ENCODE measurements at regions of chr1 and their contacts with region 1.

Region 1: DNA sequence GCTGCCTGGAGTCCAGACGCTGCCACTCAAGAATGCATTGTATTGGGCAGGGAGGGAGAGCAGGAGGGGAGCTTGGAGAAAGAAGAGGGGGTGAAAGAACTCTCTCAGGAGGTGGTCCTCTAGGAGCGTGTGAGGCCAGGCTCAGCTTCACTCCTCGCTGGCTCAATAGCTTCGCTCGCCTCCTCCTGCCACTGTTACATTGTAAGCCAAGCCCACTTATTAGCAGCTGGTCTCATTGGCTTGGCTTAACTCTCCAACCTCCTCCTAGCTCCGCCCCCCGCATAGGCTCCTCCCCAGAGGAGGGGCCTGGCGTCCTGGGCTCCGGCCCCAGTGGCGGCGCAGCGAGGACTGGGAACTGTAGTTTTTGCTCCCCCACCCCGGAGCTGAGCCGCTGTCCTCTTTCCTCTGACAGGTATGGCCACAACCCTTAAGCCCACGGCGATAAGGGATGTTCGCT is at the start of gene KCNN3:
- DNase-seq: peak; percentile 98
- ATAC-seq: peak; percentile 99
- H3K4me3 Mint-ChIP-seq: peak within 1 kb of the TSS; percentile 69
- H3K27ac Mint-ChIP-seq: no peak within 1 kb of the TSS
- H3K4me1 Mint-ChIP-seq: peaks cover 50% of the 10 kb centered on the region
- H3K27me3 Mint-ChIP-seq: peaks cover 29% of the 10 kb centered on the region
- CTCF ChIP-seq: no peak
- total RNA-seq, gene KCNN3: 1.3 to 2.1 TPM (median 1.9 TPM) in 3 replicates

Region 2: DNA sequence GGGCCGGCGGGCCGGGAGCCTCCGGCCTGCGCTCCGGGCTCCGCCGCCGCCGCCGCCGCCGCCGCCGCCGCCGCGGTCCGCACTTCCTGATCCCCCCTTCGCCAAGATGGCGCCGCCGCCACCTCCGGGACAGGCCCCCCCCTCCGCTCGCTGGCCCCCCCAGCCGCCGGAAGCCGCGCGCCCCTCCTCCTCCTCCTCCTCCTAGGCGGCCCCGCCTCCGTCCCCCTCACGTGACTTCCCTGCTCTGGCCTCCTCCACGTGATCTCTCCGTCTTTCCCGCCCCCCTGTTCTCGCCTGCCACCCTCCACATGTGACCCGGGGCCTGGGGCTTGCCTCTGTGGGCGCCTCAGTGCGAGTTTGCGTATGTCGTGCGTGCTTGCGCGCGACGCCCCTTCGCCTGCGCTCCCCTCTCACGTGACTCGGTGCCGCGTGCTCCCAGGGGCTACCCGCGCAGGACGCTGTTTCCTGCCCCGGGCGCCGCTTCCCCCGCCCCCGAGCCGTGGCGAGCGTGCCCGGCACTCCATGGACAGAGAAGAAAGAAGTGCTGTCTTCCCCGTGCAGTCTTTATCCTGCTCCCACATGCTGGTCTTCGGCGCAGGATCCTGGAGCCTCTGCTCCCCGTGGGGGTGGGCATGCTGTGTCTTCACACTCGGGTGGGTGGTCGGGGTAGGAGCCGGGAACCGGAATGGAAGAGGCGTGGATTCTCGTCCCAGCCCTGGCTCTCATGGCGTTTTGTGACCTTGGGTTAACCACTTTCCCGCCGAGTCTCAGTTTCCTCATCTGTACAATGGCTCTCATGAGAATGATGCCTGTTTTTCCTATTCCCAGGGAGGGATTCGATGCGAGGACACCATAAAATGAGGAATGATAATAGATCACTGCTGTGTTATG is 311.3 kb before region 1 on chr1 and contains the start of gene UBE2Q1:
- CTCF ChIA-PET with region 1: interaction called, 14 read pairs
- POLR2A ChIA-PET with region 1: no interaction called
- DNase-seq: peak; percentile 95
- ATAC-seq: peak; percentile 70
- H3K4me3 Mint-ChIP-seq: peak within 1 kb of the TSS; percentile 94
- H3K27ac Mint-ChIP-seq: peak within 1 kb of the TSS; percentile 89
- H3K4me1 Mint-ChIP-seq: peaks cover 28% of the 10 kb centered on the region
- H3K27me3 Mint-ChIP-seq: no peaks in the 10 kb centered on the region
- CTCF ChIP-seq: no peak
- total RNA-seq, gene UBE2Q1: 60.8 to 62.7 TPM (median 61.6 TPM) in 3 replicates

Region 3: DNA sequence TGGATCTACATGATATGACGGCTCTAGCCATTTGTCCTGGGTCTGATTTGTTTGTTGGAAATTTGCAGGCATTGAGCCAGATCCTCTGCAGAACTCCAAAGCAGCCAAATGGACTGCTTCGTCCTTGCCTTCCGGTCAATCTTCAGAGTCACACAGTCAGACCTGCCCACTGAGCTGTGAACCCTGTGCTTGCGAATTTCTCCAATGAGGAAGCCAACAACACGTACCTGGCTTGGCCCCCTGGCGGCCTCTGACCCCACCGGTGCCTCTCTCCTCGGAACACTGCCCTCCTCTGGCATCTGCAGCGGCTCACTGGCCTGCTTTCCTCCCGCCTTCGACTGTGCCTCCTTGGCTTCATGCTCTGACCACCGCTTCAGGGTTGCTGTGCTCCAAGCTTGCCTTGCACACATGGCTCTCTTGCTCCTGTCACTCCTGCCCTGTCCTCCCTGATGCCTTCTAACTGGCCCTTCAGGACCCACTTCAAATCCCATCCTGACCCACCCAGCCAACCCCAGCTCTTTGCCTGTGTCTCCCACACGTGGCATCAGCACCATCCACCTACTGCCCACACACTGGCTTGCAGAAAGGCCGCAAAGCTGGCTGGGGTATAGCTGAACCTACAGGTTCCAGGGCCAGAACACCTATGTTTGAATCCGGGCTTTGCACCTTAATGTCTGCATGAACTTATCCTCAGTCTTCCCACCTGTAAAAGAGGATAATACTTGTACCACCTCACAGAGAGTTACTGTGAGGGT is 128.2 kb before region 1 on chr1:
- CTCF ChIA-PET with region 1: interaction called, 12 read pairs
- POLR2A ChIA-PET with region 1: interaction called, 3 read pairs
- DNase-seq: peak; percentile 83
- ATAC-seq: peak; percentile 98
- H3K4me3 Mint-ChIP-seq: no peak overlapping the region
- H3K27ac Mint-ChIP-seq: no peak overlapping the region
- H3K4me1 Mint-ChIP-seq: peaks cover 39% of the 10 kb centered on the region
- H3K27me3 Mint-ChIP-seq: no peaks in the 10 kb centered on the region
- CTCF ChIP-seq: peak; percentile 39

Region 4: DNA sequence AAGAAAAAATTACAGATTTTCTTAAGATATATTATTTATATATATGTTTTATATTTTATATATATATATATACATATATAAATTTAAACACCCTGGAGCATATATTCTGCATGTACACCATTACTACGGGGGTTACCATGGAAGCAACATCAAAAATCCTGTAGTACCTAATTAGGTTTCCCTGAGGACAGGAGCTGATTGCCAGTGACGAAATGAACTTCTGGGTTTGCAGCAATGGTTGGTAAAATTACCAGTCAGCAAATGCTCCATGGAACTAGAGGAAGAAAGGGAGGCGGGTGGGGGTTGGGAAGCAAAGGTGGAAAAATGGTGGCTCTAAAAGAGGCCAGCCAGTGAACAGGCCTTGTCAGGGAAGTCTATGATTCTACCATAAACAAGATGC is 89.6 kb before region 1 on chr1:
- CTCF ChIA-PET with region 1: no interaction called
- POLR2A ChIA-PET with region 1: no interaction called
- DNase-seq: no peak
- ATAC-seq: no peak
- H3K4me3 Mint-ChIP-seq: no peak overlapping the region
- H3K27ac Mint-ChIP-seq: no peak overlapping the region
- H3K4me1 Mint-ChIP-seq: peaks cover 9% of the 10 kb centered on the region
- H3K27me3 Mint-ChIP-seq: peaks cover 3% of the 10 kb centered on the region; the same call in 1 of the 2 replicates
- CTCF ChIP-seq: no peak

Region 5: GRCh38 chr1:154819628-154820590 is 50.2 kb before region 1 on chr1:
- CTCF ChIA-PET with region 1: interaction called, 12 read pairs
- POLR2A ChIA-PET with region 1: no interaction called
- DNase-seq: peak; percentile 66
- ATAC-seq: peak; percentile 97
- H3K4me3 Mint-ChIP-seq: no peak overlapping the region
- H3K27ac Mint-ChIP-seq: no peak overlapping the region
- H3K4me1 Mint-ChIP-seq: peaks cover 13% of the 10 kb centered on the region
- H3K27me3 Mint-ChIP-seq: no peaks in the 10 kb centered on the region
- CTCF ChIP-seq: peak; percentile 63

Region 6: DNA sequence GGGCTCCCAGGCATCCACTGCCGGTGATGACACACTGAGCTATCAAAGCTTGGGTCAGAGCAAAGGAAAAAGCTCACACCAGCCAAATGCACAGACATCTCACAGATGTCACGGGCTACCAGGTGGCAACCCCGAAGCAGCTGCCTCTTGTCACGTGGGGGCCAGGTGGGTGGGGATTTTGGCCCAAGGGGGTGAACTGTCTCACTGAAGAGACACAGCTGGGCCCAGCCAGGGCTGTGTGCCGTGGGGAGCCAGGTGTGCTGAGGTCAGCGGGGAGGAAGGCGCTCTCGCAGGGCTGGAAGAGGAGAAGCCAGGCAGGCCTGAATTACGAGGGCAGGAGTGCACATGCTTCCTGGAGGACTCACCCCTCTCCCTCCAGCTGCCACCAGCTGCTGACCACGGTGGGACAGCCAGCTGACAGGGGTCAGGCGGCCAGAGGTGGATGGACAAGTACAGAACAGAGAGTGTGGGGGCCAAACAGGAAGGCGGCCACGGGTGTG is 32.4 kb before region 1 on chr1:
- CTCF ChIA-PET with region 1: interaction called, 19 read pairs
- POLR2A ChIA-PET with region 1: no interaction called
- DNase-seq: no peak
- ATAC-seq: no peak
- H3K4me3 Mint-ChIP-seq: no peak overlapping the region
- H3K27ac Mint-ChIP-seq: no peak overlapping the region
- H3K4me1 Mint-ChIP-seq: peaks cover 19% of the 10 kb centered on the region
- H3K27me3 Mint-ChIP-seq: no peaks in the 10 kb centered on the region
- CTCF ChIP-seq: no peak

Region 7: GRCh38 chr1:154856049-154856448 is 14.1 kb before region 1 on chr1:
- CTCF ChIA-PET with region 1: interaction called, 33 read pairs
- POLR2A ChIA-PET with region 1: interaction called, 4 read pairs
- DNase-seq: peak; percentile 49
- ATAC-seq: no peak; the same call in 1 of the 2 replicates
- H3K4me3 Mint-ChIP-seq: no peak overlapping the region
- H3K27ac Mint-ChIP-seq: no peak overlapping the region
- H3K4me1 Mint-ChIP-seq: peaks cover 12% of the 10 kb centered on the region
- H3K27me3 Mint-ChIP-seq: no peaks in the 10 kb centered on the region
- CTCF ChIP-seq: no peak

Region 8: DNA sequence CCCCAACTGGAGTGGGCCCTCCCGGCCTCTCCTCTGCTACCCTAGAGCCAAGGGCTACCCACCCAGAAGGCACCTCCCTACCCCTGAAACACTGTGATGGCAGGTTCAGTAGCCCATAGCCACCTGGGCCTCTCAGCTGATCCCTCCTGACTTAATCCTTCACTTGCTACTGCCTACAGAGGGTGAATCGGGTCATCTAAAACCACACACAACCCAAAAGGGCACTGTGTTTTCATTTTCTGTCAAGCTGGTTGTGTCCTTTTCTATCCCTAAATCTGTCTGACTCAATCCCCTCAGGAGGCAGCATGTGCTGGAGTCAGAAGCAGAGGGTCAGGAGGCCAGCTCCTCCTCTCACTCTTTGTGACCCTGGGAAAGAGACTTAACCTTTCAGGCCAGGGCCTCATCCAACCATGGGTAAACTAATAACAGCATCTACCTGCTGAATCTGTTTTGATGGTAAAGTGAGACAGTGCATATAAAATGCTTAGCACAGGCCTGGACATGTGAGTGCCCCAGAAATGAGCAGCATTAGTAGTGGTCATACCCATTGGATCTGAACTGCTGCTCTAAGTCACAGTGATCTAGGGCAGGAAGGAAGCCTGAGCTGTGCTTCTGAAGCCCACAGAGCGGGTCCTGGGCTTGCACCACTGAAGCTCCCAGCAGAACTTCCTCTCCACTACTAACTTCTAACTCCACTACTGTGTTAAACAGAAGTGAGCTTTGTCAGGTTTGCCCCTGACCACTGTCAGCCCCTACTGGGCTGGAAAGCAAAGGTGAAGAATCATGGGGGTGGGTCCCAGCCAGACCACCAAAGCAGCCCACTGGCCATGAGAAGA is 55.4 kb after region 1 on chr1:
- CTCF ChIA-PET with region 1: no interaction called
- POLR2A ChIA-PET with region 1: no interaction called
- DNase-seq: no peak
- ATAC-seq: no peak
- H3K4me3 Mint-ChIP-seq: no peak overlapping the region
- H3K27ac Mint-ChIP-seq: no peak overlapping the region
- H3K4me1 Mint-ChIP-seq: no peaks in the 10 kb centered on the region
- H3K27me3 Mint-ChIP-seq: no peaks in the 10 kb centered on the region
- CTCF ChIP-seq: no peak

Region 9: DNA sequence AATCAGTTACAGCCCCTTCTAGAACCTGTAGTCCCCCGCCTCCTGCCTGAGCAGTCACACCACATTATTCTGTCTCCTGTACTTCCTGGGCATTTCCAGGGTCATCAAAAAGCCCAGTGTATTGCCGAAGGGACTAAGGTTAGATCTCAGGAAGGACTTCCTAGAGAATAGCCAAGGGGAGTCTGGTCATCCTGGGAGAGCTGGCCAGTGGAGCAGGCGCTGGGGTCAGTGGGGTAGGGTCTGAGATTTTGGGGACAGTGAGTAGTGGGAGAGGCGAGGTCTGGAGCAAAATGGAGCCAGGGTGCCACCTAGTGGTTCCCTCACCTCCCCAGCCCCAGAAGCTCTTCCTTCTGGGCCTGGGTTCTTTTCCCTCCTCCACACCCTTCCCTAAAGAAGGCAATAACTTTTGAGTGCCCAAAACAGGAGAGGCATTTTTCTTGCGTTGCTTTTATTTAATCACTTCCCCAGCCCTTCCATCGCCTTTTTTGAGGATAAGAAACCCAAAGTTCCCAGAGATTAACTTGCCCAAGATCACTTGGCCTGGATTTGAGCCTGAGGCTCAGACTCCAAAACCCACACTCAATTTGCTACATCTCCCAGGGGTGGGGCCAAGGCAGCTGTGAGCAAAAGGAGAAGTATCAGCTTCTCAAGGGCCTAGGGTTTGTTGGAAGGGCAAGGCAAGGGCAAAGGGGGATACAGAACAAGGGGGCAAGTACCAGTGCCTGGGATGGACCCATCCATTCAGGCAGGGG is 73.7 kb after region 1 on chr1:
- CTCF ChIA-PET with region 1: interaction called, 13 read pairs
- POLR2A ChIA-PET with region 1: no interaction called
- DNase-seq: peak; percentile 68
- ATAC-seq: peak; percentile 81
- H3K4me3 Mint-ChIP-seq: no peak overlapping the region
- H3K27ac Mint-ChIP-seq: peak overlapping the region; percentile 82
- H3K4me1 Mint-ChIP-seq: peaks cover 24% of the 10 kb centered on the region
- H3K27me3 Mint-ChIP-seq: no peaks in the 10 kb centered on the region
- CTCF ChIP-seq: peak; percentile 45

Measured in WTC11 (cell line).